Uterus (tissue), 4 donors: ENCODE measurements at regions of chr15 and their contacts with region 1.

Region 1: GRCh38 chr15:96327155-96327741 is 3.3 kb upstream of the NR2F2 start:
- DNase-seq: peak; percentile 22 to 68
- H3K4me3 ChIP-seq: peak overlapping the region; percentile 69 to 79
- H3K27ac ChIP-seq: peak overlapping the region; percentile 98 to 100
- H3K4me1 ChIP-seq: no peaks in the 10 kb centered on the region
- H3K27me3 ChIP-seq: no peaks in the 10 kb centered on the region
- CTCF ChIP-seq: peak; percentile 78 to 89 (median 87)
- POLR2A ChIP-seq: peak in 1 of 2 donors; percentile 62

Region 2: GRCh38 chr15:95259965-95260364 is 1067.3 kb before region 1 on chr15:
- intact Hi-C with region 1: loop called (anchors 10 kb)
- DNase-seq: peak in 1 of 2 donors; percentile 25
- H3K4me3 ChIP-seq: no peak overlapping the region
- H3K27ac ChIP-seq: peak overlapping the region; percentile 9 to 36
- H3K4me1 ChIP-seq: peaks cover 0 to 4% of the 10 kb centered on the region in 2 donors
- H3K27me3 ChIP-seq: no peaks in the 10 kb centered on the region
- CTCF ChIP-seq: no peak
- POLR2A ChIP-seq: no peak

Region 3: GRCh38 chr15:96181873-96182301 is 145.4 kb before region 1 on chr15:
- intact Hi-C with region 1: loop called (anchors 10 kb)
- DNase-seq: peak; percentile 87 to 88
- H3K4me3 ChIP-seq: no peak overlapping the region
- H3K27ac ChIP-seq: peak overlapping the region; percentile 86 to 88
- H3K4me1 ChIP-seq: peaks cover 0 to 10% of the 10 kb centered on the region in 2 donors
- H3K27me3 ChIP-seq: no peaks in the 10 kb centered on the region
- CTCF ChIP-seq: no peak
- POLR2A ChIP-seq: no peak